Activated T-helper 1 cell treated with anti-CD3 and anti-CD28 coated beads, Interleukin-12 subunit alpha, Interleukin-12 subunit beta, Interleukin-2, Interleukin-4 antibody, amounts not matched to agents 30 ng/mL and 10 ng/mL and 1 ng/mL, durations not matched to agents 14 hours and 24 hours and 36 hours (primary cell): ENCODE measurements at regions of chr3 and their contacts with region 1.

Region 1: GRCh38 chr3:143847787-143848631 is at the start of gene SLC9A9:
- DNase-seq: peak; percentile 11
- H3K4me3 Mint-ChIP-seq: peak within 1 kb of the TSS; percentile 94
- H3K27ac Mint-ChIP-seq: peak within 1 kb of the TSS; percentile 86
- H3K4me1 Mint-ChIP-seq: peaks cover 47% of the 10 kb centered on the region
- H3K27me3 Mint-ChIP-seq: peaks cover 5% of the 10 kb centered on the region
- total RNA-seq, gene SLC9A9: 0.64 and 0.88 TPM in 2 replicates

Region 2: GRCh38 chr3:143067201-143067600 is 780.8 kb before region 1 on chr3:
- intact Hi-C with region 1: loop called (anchors 5 kb)
- DNase-seq: no peak
- H3K4me3 Mint-ChIP-seq: no peak overlapping the region
- H3K27ac Mint-ChIP-seq: no peak overlapping the region
- H3K4me1 Mint-ChIP-seq: no peaks in the 10 kb centered on the region
- H3K27me3 Mint-ChIP-seq: no peaks in the 10 kb centered on the region

Region 3: DNA sequence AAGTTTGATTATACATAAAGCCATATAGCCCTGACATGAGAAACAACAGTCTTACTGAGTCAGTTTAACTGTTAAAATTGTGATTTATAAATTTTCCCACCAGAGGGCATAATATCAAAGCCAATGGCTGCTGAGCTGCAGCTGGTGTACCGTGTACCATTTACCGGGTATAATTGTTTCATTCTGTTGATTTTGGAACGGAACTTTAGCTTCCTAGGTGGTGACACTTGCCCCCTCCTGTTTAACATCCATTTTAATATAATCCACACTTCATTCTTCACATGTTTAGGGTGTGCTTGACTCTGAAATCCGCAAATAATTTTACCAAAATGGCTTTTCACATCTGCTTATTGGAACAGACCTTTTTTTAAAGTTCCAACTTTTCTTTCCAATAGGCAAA is 72.5 kb before region 1 on chr3:
- intact Hi-C with region 1: loop called (anchors 1 kb)
- DNase-seq: no peak
- H3K4me3 Mint-ChIP-seq: no peak overlapping the region
- H3K27ac Mint-ChIP-seq: no peak overlapping the region
- H3K4me1 Mint-ChIP-seq: peaks cover 8% of the 10 kb centered on the region
- H3K27me3 Mint-ChIP-seq: peaks cover 2% of the 10 kb centered on the region

Region 4: GRCh38 chr3:143814443-143814889 is 33.5 kb before region 1 on chr3:
- intact Hi-C with region 1: loop called (anchors 1 kb)
- DNase-seq: no peak
- H3K4me3 Mint-ChIP-seq: peak overlapping the region; percentile 11
- H3K27ac Mint-ChIP-seq: peak overlapping the region; percentile 49
- H3K4me1 Mint-ChIP-seq: peaks cover 16% of the 10 kb centered on the region
- H3K27me3 Mint-ChIP-seq: no peaks in the 10 kb centered on the region

Region 5: GRCh38 chr3:143831208-143831607 is 16.8 kb before region 1 on chr3:
- intact Hi-C with region 1: loop called (anchors 1 kb)
- DNase-seq: no peak
- H3K4me3 Mint-ChIP-seq: no peak overlapping the region
- H3K27ac Mint-ChIP-seq: no peak overlapping the region
- H3K4me1 Mint-ChIP-seq: peaks cover 43% of the 10 kb centered on the region
- H3K27me3 Mint-ChIP-seq: no peaks in the 10 kb centered on the region

Region 6: DNA sequence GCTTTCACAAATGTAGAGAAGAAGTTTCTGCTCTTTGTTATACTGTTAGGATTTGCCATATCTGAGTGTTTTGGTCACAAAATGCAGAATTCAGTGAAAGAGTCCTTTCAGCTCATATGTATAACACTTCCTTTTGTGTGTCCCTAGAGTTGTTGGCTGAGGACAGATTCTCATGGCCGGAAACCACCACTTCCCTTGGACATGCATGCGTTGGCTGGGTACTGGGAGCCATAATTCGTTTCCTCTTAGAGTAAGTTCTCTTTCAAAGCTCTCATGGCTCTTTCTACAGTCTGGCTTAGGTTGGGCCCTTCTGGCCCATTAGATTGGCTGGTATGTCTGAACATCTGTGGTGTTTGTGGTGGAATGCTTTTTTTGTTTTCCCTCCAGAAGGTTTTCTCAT is 422.1 kb after region 1 on chr3:
- intact Hi-C with region 1: no loop called
- DNase-seq: no peak
- H3K4me3 Mint-ChIP-seq: no peak overlapping the region
- H3K27ac Mint-ChIP-seq: no peak overlapping the region
- H3K4me1 Mint-ChIP-seq: no peaks in the 10 kb centered on the region
- H3K27me3 Mint-ChIP-seq: no peaks in the 10 kb centered on the region